Activated CD4-positive, alpha-beta T cell treated with anti-CD3 and anti-CD28 coated beads, Interleukin-2, amount 10 ng/mL, durations not matched to agents 7 days and 5 days (primary cell): ENCODE measurements at regions of chr3 and their contacts with region 1.

Region 1: DNA sequence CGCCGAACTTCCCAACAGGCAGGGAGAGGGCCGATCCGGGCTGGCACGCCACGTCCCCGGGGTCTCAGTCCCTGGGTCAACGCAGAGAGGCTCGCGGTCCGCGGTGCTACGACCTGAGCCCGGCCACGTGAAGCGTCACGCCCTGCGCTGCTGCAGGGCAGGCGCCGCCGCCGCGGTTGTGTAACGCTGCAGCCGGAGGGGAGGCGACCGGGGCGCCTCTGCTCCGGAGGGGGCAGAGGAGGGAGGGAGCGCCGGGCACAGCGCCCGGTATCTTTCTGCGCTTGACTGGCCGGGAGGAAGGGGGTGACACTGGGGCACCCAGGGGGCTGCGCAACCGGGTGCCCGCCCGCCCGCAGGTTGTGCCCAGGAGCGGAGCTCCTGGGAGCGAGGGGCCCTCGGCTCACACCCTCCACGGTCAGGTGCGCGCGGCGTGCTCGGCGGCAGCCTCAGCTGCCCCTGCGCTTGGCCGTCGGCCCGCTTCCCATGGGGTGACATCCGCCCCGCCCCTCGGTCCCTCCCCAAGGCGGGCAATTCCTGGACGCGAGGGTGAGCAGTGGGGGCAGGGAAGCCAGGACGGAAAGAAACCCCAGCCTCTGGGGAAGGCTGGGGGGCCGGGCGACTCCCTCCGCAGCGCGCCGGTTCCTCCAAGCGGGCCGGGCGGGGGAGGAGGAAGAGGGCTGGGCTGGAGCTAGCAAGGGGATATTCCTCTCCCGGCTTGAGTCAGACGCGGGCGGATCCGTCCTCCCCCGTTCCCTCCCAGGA is 852 bp upstream of the BHLHE40 start:
- DNase-seq: peak; percentile 83
- H3K4me3 Mint-ChIP-seq: peak overlapping the region; percentile 99
- H3K27ac Mint-ChIP-seq: peak overlapping the region; percentile 98
- H3K4me1 Mint-ChIP-seq: peaks cover 49% of the 10 kb centered on the region
- H3K27me3 Mint-ChIP-seq: no peaks in the 10 kb centered on the region

Region 2: GRCh38 chr3:4736284-4736861 is 242.0 kb before region 1 on chr3:
- CTCF ChIA-PET with region 1: interaction called, 12 read pairs
- POLR2A ChIA-PET with region 1: interaction called, 3 read pairs
- DNase-seq: no peak
- H3K4me3 Mint-ChIP-seq: no peak overlapping the region
- H3K27ac Mint-ChIP-seq: peak overlapping the region; percentile 81
- H3K4me1 Mint-ChIP-seq: peaks cover 89% of the 10 kb centered on the region
- H3K27me3 Mint-ChIP-seq: no peaks in the 10 kb centered on the region

Region 3: DNA sequence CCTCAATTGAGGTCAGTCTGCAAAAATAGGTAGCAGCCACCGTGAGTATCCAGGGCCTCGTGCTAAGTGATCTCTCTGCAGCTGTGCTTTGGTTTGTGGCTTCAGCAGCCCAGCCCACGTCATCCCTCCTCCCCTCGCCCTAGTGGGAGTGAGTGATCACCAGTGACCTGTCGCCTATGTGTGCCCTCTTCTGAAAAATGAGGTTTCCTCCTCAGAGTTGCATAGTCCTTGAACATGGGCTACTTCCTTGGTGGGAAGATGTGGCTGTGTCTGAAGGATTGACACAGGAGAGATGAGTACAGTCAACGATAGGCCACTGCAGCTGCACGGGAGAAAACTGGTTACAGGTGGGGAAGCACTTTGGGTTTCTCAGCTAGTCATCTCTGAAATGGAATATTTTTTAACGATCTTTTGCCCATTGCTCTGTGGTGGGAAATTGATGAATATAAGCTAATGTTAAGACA is 143.9 kb before region 1 on chr3:
- CTCF ChIA-PET with region 1: interaction called, 21 read pairs
- POLR2A ChIA-PET with region 1: interaction called, 3 read pairs
- DNase-seq: peak; percentile 78
- H3K4me3 Mint-ChIP-seq: peak overlapping the region; percentile 64
- H3K27ac Mint-ChIP-seq: peak overlapping the region; percentile 94
- H3K4me1 Mint-ChIP-seq: peaks cover 94% of the 10 kb centered on the region
- H3K27me3 Mint-ChIP-seq: no peaks in the 10 kb centered on the region

Region 4: GRCh38 chr3:4906107-4906621 is 72.2 kb before region 1 on chr3:
- CTCF ChIA-PET with region 1: interaction called, 17 read pairs
- POLR2A ChIA-PET with region 1: interaction called, 3 read pairs
- DNase-seq: no peak
- H3K4me3 Mint-ChIP-seq: no peak overlapping the region
- H3K27ac Mint-ChIP-seq: no peak overlapping the region
- H3K4me1 Mint-ChIP-seq: peaks cover 61% of the 10 kb centered on the region
- H3K27me3 Mint-ChIP-seq: no peaks in the 10 kb centered on the region

Region 5: DNA sequence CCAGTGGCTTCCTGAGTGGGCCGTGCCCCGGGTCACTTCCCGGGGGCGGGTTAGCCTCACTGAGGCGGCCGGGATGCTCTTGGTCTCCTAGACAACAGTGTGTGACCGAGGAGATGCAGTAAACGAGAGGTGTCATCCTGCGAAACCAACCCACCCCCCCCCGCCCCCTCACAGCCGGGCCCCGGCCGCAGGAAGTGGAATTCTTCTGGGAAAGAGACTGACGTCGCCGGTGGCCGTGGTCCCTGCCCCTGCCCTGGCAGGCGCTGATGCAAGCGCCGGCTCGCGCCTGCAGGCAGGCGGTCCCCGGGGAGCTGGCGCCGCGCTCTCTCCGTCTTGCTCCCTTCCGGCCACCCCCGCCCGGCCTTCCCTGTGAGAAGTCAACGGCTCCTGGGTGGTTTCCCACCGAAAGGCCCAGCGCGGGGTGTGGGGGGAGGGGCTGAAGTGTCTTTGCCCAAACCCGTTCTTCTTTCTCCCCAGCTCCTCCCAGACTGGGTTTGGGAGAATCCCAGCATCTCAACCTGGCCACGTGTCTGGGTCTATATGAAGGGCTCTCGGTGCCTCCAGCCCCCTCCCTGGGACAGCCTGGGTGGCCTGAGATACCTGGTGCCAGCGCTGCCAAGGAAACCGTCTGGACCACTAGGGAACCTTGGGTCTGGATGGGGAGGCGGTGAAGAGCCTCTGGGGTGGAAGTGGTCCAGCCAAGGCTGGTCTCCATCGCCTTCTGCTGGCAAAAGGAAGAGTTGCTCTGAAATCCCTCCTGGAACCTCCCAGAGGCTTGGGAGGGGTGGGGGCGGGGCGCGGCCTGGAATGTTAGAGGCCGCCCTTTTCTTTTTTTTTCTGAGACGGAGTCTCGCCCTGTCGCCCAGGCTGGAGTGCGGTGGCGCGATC is 48.2 kb after region 1 on chr3:
- CTCF ChIA-PET with region 1: interaction called, 26 read pairs
- POLR2A ChIA-PET with region 1: interaction called, 6 read pairs
- DNase-seq: peak; percentile 63
- H3K4me3 Mint-ChIP-seq: peak overlapping the region; percentile 74
- H3K27ac Mint-ChIP-seq: peak overlapping the region; percentile 85
- H3K4me1 Mint-ChIP-seq: peaks cover 42% of the 10 kb centered on the region
- H3K27me3 Mint-ChIP-seq: peaks cover 2% of the 10 kb centered on the region